Naive thymus-derived CD4-positive, alpha-beta T cell (primary cell): ENCODE measurements at regions of chr14 and their contacts with region 1.

Region 1: GRCh38 chr14:77053046-77053841 is 24.7 kb upstream of the IRF2BPL start:
- DNase-seq: peak; percentile 69 to 81 (median 76)
- ATAC-seq: peak; percentile 93
- H3K4me3 ChIP-seq: no peak overlapping the region
- H3K4me3 Mint-ChIP-seq: no peak overlapping the region
- H3K27ac ChIP-seq: no peak overlapping the region
- H3K27ac Mint-ChIP-seq: peak overlapping the region in 3 of 9 donors; percentile 17 to 79 (median 39)
- H3K4me1 ChIP-seq: peaks cover 0 to 7% of the 10 kb centered on the region in 2 donors
- H3K4me1 Mint-ChIP-seq: peaks cover 0 to 18% (median 7%) of the 10 kb centered on the region in 7 donors
- H3K27me3 ChIP-seq: no peaks in the 10 kb centered on the region
- H3K27me3 Mint-ChIP-seq: no peaks in the 10 kb centered on the region

Region 2: GRCh38 chr14:76904740-76905438 is 148.4 kb before region 1 on chr14:
- CTCF ChIA-PET with region 1: interaction called, 98 read pairs
- POLR2A ChIA-PET with region 1: no interaction called
- intact Hi-C with region 1: no loop called
- DNase-seq: peak in 8 of 9 donors; percentile 51 to 73 (median 62)
- ATAC-seq: peak; percentile 80
- H3K4me3 ChIP-seq: peak overlapping the region; percentile 1
- H3K4me3 Mint-ChIP-seq: peak overlapping the region in 9 of 10 donors; percentile 59 to 81 (median 71)
- H3K27ac ChIP-seq: no peak overlapping the region
- H3K27ac Mint-ChIP-seq: peak overlapping the region; percentile 43 to 97 (median 83)
- H3K4me1 ChIP-seq: peaks cover 18 to 24% of the 10 kb centered on the region in 2 donors
- H3K4me1 Mint-ChIP-seq: peaks cover 23 to 41% (median 27%) of the 10 kb centered on the region in 7 donors
- H3K27me3 ChIP-seq: no peaks in the 10 kb centered on the region
- H3K27me3 Mint-ChIP-seq: peaks cover 0 to 8% (median 0%) of the 10 kb centered on the region in 5 donors

Region 3: DNA sequence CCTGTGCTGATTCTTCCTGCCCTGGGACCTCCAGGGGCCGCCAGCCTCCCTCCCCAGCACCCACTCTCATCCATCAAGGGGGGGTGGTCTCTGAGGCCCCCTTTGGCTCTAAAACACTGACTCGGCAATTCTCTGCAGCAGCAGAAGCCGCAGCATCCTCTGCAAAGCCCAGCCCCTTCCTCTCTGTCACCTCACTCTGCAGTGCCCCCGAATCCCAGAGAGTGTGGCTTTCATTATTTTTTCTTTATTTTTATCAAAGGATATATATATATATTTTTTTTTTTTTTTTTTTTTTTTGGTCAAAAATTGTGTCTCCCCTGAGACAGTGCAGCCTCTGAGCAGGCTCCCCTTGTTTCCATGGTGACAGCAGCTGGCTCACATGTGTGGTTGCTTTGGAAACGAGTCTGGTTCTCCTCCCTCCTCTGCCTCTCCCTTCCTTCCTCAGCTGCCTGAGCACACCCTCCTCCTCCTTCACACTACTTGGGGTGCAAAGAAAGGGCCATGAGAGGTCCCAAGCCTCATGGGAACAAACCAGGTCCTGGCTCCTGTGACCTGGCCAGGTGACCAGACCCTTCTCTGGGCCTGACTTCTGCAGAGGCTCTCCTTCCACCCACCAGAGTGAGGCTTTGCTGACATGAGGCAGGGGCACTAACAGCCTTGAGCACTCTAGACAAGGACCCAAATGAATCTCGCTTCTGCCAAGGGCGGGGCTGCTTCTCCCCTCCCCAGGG is 126.6 kb before region 1 on chr14:
- CTCF ChIA-PET with region 1: interaction called, 10 read pairs
- POLR2A ChIA-PET with region 1: interaction called, 6 read pairs
- intact Hi-C with region 1: no loop called
- DNase-seq: peak in 8 of 9 donors; percentile 50 to 90 (median 69)
- ATAC-seq: peak; percentile 73
- H3K4me3 ChIP-seq: peak overlapping the region; percentile 6
- H3K4me3 Mint-ChIP-seq: peak overlapping the region; percentile 65 to 88 (median 80)
- H3K27ac ChIP-seq: peak overlapping the region; percentile 65
- H3K27ac Mint-ChIP-seq: peak overlapping the region; percentile 56 to 96 (median 90)
- H3K4me1 ChIP-seq: peaks cover 52 to 72% of the 10 kb centered on the region in 2 donors
- H3K4me1 Mint-ChIP-seq: peaks cover 50 to 96% (median 86%) of the 10 kb centered on the region in 7 donors
- H3K27me3 ChIP-seq: no peaks in the 10 kb centered on the region
- H3K27me3 Mint-ChIP-seq: no peaks in the 10 kb centered on the region

Region 4: DNA sequence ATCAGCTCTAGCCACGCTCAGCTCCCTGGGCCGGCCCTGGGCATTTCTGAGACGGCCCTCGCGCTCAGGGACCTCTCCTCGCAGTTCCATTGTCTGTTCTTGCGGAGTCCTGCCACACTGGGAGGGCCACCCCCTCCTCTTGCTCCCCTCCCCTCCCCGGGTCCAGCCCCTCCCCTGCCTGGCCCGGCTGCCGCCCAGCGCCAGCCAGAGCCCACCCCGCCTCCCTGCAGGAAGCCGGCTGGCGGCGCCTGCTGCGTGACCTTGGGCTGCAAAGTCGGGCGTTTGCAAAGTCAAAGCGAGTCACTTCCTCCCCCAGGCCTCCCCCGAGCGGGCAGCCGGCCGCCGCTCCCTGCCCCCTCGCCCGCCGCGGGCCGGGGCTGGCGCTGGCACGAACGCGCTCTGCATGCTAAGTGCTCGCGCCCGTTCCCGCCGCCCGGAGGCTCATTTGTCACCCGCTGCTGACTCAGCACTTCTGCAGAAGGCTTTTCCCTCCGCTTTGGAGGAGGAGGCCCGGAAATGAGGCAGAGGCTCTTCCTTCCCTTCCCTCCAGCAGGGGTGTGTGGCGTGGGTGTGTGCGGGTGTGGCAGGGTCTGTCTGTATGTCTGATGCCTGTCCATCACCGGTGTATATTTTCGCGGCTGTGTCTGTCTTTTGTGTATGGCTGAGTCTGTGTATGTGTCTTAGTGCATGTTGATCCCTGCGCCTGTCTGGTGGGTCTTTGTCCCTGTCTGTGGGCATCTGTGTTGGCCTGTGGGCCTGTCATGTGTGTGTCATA is 96.7 kb before region 1 on chr14:
- CTCF ChIA-PET with region 1: interaction called, 18 read pairs
- POLR2A ChIA-PET with region 1: interaction called, 7 read pairs
- intact Hi-C with region 1: loop called in 1 of 2 experiments (anchors 2 kb)
- DNase-seq: peak; percentile 70 to 90 (median 78)
- ATAC-seq: peak; percentile 82
- H3K4me3 ChIP-seq: peak overlapping the region; percentile 74
- H3K4me3 Mint-ChIP-seq: peak overlapping the region; percentile 82 to 97 (median 93)
- H3K27ac ChIP-seq: peak overlapping the region; percentile 87
- H3K27ac Mint-ChIP-seq: peak overlapping the region; percentile 88 to 99 (median 98)
- H3K4me1 ChIP-seq: peaks cover 38 to 49% of the 10 kb centered on the region in 2 donors
- H3K4me1 Mint-ChIP-seq: peaks cover 24 to 77% (median 71%) of the 10 kb centered on the region in 7 donors
- H3K27me3 ChIP-seq: no peaks in the 10 kb centered on the region
- H3K27me3 Mint-ChIP-seq: no peaks in the 10 kb centered on the region

Region 5: GRCh38 chr14:77023001-77023996 is 29.9 kb before region 1 on chr14:
- CTCF ChIA-PET with region 1: interaction called, 22 read pairs
- POLR2A ChIA-PET with region 1: interaction called, 24 read pairs
- intact Hi-C with region 1: loop called in 1 of 2 experiments (anchors 1 kb)
- DNase-seq: peak in 1 of 9 donors; percentile 44
- ATAC-seq: no peak
- H3K4me3 ChIP-seq: no peak overlapping the region
- H3K4me3 Mint-ChIP-seq: peak overlapping the region in 9 of 10 donors; percentile 1 to 81 (median 42)
- H3K27ac ChIP-seq: no peak overlapping the region
- H3K27ac Mint-ChIP-seq: peak overlapping the region in 8 of 9 donors; percentile 3 to 86 (median 58)
- H3K4me1 ChIP-seq: peaks cover 28 to 32% of the 10 kb centered on the region in 2 donors
- H3K4me1 Mint-ChIP-seq: peaks cover 12 to 42% (median 36%) of the 10 kb centered on the region in 7 donors
- H3K27me3 ChIP-seq: no peaks in the 10 kb centered on the region
- H3K27me3 Mint-ChIP-seq: no peaks in the 10 kb centered on the region

Region 6: GRCh38 chr14:77033622-77034521 is 19.4 kb before region 1 on chr14:
- CTCF ChIA-PET with region 1: interaction called, 22 read pairs
- POLR2A ChIA-PET with region 1: interaction called, 32 read pairs
- intact Hi-C with region 1: loop called in 1 of 2 experiments (anchors 1 kb)
- DNase-seq: peak in 7 of 9 donors; percentile 32 to 89 (median 47)
- ATAC-seq: peak; percentile 76
- H3K4me3 ChIP-seq: peak overlapping the region; percentile 79
- H3K4me3 Mint-ChIP-seq: peak overlapping the region; percentile 81 to 93 (median 90)
- H3K27ac ChIP-seq: peak overlapping the region; percentile 95
- H3K27ac Mint-ChIP-seq: peak overlapping the region; percentile 92 to 98 (median 94)
- H3K4me1 ChIP-seq: peaks cover 37 to 67% of the 10 kb centered on the region in 2 donors
- H3K4me1 Mint-ChIP-seq: peaks cover 45 to 85% (median 78%) of the 10 kb centered on the region in 7 donors
- H3K27me3 ChIP-seq: no peaks in the 10 kb centered on the region
- H3K27me3 Mint-ChIP-seq: no peaks in the 10 kb centered on the region

Region 7: DNA sequence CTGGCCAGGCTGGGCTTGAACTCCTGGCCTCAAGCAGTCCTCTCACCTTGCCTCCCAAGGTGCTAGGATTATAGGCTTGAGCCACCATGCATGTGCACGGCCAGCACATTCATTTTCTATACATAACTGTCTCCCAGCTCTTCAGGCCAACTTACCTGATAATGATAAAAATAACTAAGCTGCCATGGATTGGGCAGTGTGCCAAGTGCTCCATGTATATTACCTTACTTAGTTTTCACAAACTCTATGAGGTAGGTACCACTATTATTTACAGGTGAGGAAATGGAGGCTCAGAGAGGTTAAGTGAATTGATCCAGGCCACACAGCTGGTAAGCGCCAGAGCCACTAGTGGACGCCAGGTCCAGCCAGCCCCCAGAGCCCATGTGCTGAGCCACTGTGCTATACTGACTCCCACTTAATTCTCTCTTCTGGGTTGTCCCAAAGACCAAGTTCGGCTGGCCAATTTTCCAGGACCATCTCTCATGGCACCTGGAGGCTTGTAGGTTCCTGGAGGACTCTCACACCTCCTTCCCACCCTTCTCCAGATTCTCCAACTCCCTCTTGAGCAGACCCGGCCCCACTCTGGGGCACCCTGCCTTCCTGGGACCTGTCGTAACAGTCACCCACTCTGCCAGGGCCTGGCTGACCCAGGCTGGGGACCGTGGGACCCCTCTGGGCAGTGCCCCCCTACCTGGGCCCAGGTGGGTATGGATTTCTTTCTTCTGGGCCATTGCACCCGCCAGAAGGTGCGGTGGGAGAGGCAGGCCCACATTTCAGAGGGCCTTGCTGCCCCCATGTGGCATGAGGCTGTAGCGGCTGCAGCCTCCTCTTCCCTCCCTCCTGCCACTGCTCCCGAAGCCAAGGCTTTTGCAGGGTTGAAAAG is 14.6 kb after region 1 on chr14:
- CTCF ChIA-PET with region 1: interaction called, 23 read pairs
- POLR2A ChIA-PET with region 1: no interaction called
- intact Hi-C with region 1: loop called (anchors 1 kb)
- DNase-seq: peak; percentile 21 to 59 (median 48)
- ATAC-seq: peak; percentile 79
- H3K4me3 ChIP-seq: no peak overlapping the region
- H3K4me3 Mint-ChIP-seq: no peak overlapping the region
- H3K27ac ChIP-seq: no peak overlapping the region
- H3K27ac Mint-ChIP-seq: peak overlapping the region in 1 of 9 donors; percentile 36
- H3K4me1 ChIP-seq: no peaks in the 10 kb centered on the region
- H3K4me1 Mint-ChIP-seq: peaks cover 0 to 3% (median 0%) of the 10 kb centered on the region in 7 donors
- H3K27me3 ChIP-seq: no peaks in the 10 kb centered on the region
- H3K27me3 Mint-ChIP-seq: peaks cover 0 to 11% (median 4%) of the 10 kb centered on the region in 5 donors